ENCODE measurements at regions of chr14 and their contacts with region 1.

Region 1: GRCh38 chr14:65412032-65412846 is at the start of gene FUT8:
- DNase-seq: peak; percentile 84
- H3K27ac ChIP-seq: peak within 1 kb of the TSS; percentile 94
- CTCF ChIP-seq: peak; percentile 74

Region 2: DNA sequence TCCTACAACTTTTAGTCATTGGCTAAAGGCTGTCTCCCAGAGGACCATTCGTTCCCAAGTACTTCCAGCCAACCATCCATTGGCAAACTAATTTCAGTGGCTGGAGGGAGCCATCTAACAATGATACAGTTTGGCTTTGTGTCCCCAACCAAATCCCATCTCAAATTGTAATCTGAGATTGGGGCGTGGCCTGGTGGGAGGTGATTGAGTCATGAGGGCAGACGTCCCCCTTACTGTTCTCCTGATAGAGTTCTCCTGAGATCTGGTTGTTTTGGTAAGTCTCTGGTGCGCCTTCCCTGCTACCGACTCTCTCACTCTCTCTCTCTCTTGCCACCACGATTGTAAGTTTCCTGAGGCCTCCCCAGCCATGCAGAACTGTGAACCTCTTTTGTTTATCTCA is 99.4 kb before region 1 on chr14:
- CTCF ChIA-PET with region 1: no interaction called
- POLR2A ChIA-PET with region 1: no interaction called
- DNase-seq: no peak
- H3K27ac ChIP-seq: no peak overlapping the region
- CTCF ChIP-seq: no peak

Region 3: GRCh38 chr14:65439117-65439516 is 26.9 kb after region 1 on chr14:
- CTCF ChIA-PET with region 1: no interaction called
- POLR2A ChIA-PET with region 1: no interaction called
- DNase-seq: no peak
- H3K27ac ChIP-seq: no peak overlapping the region
- CTCF ChIP-seq: no peak

Region 4: GRCh38 chr14:65453807-65454480 is 41.7 kb after region 1 on chr14:
- CTCF ChIA-PET with region 1: no interaction called
- POLR2A ChIA-PET with region 1: no interaction called
- DNase-seq: no peak
- H3K27ac ChIP-seq: no peak overlapping the region
- CTCF ChIP-seq: no peak

Region 5: DNA sequence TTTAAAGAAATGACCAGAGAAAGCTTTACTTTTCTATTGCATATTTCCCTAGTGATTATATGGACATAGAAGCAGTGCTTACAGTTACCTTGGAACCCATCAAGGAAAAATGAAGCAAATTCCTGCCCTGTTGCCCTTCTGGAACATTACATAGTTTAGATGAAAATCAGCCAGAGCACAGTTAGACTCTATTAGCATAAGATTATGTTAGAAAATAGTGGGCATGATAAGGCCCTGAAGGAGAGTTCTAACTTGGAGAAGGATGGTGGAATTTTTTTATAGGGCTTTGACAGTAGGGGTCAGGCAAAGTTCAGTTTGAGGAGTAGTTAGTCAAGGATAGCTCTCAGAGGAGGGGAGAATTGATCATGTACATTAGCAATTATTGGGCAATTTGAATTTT is 74.6 kb after region 1 on chr14:
- CTCF ChIA-PET with region 1: no interaction called
- POLR2A ChIA-PET with region 1: no interaction called
- DNase-seq: no peak
- H3K27ac ChIP-seq: no peak overlapping the region
- CTCF ChIP-seq: no peak

Region 6: GRCh38 chr14:65824285-65824977 is 412.2 kb after region 1 on chr14:
- CTCF ChIA-PET with region 1: interaction called, 23 read pairs
- POLR2A ChIA-PET with region 1: no interaction called
- DNase-seq: peak; percentile 54
- H3K27ac ChIP-seq: no peak overlapping the region
- CTCF ChIP-seq: peak; percentile 89